ENCODE measurements at regions of chr1 and their contacts with region 1.

Region 1: GRCh38 chr1:15847100-15847892 is at the start of gene SPEN:
- DNase-seq: peak; percentile 97 to 99 (median 99)
- ATAC-seq: peak; percentile 91
- H3K4me3 ChIP-seq: peak within 1 kb of the TSS; percentile 74
- H3K4me3 Mint-ChIP-seq: peak within 1 kb of the TSS; percentile 93 to 99 (median 98)
- H3K27ac ChIP-seq: peak within 1 kb of the TSS; percentile 90
- H3K27ac Mint-ChIP-seq: peak within 1 kb of the TSS; percentile 93 to 98 (median 97)
- H3K4me1 ChIP-seq: peaks cover 20 to 26% of the 10 kb centered on the region in 2 donors
- H3K4me1 Mint-ChIP-seq: peaks cover 21 to 64% (median 44%) of the 10 kb centered on the region in 7 donors
- H3K27me3 ChIP-seq: no peaks in the 10 kb centered on the region
- H3K27me3 Mint-ChIP-seq: no peaks in the 10 kb centered on the region
- total RNA-seq, gene SPEN: 72.1 to 92.1 (median 82.9) TPM

Region 2: GRCh38 chr1:15430787-15431570 is 416.3 kb before region 1 on chr1:
- CTCF ChIA-PET with region 1: no interaction called
- POLR2A ChIA-PET with region 1: no interaction called
- intact Hi-C with region 1: no loop called
- DNase-seq: peak; percentile 48 to 85 (median 68)
- ATAC-seq: peak; percentile 72
- H3K4me3 ChIP-seq: no peak overlapping the region
- H3K4me3 Mint-ChIP-seq: no peak overlapping the region
- H3K27ac ChIP-seq: no peak overlapping the region
- H3K27ac Mint-ChIP-seq: peak overlapping the region in 1 of 9 donors; percentile 77
- H3K4me1 ChIP-seq: no peaks in the 10 kb centered on the region
- H3K4me1 Mint-ChIP-seq: peaks cover 0 to 8% (median 0%) of the 10 kb centered on the region in 7 donors
- H3K27me3 ChIP-seq: no peaks in the 10 kb centered on the region
- H3K27me3 Mint-ChIP-seq: no peaks in the 10 kb centered on the region

Region 3: DNA sequence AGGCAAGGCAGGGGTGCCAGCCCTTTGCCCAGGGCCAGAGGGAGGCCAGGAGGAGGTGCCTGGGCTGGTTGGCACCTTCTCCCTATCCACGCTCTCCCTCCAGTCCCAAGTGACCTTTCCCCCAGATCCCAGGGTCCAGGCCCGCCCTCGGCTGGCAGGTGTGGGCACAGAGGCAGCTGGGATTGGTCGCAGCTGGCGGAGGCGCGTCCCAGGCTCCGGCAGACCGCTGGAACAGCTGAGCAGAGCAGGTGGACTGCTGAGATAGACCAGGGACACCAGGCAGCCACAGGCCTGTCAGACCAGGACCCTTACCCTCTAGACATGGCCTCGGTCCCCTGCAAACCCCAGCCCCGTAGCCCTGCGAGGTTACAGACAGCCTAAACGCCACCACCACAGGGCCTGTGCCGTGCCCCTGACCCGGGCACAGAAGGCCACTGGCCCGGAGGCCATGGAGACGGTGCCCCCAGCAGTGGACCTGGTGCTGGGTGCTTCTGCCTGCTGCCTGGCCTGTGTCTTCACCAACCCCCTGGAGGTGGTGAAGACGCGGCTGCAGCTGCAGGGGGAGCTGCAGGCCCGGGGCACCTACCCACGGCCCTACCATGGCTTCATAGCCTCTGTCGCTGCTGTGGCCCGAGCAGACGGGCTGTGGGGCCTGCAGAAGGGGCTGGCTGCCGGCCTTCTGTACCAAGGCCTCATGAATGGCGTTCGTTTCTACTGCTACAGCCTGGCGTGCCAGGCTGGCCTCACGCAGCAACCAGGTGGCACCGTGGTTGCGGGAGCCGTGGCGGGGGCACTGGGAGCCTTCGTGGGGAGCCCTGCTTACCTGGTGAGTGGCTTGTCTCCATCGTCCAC is 111.0 kb before region 1 on chr1 and contains the start of gene SLC25A34:
- CTCF ChIA-PET with region 1: no interaction called
- POLR2A ChIA-PET with region 1: no interaction called
- intact Hi-C with region 1: no loop called
- DNase-seq: no peak
- ATAC-seq: no peak
- H3K4me3 ChIP-seq: no peak within 1 kb of the TSS
- H3K4me3 Mint-ChIP-seq: no peak within 1 kb of the TSS
- H3K27ac ChIP-seq: no peak within 1 kb of the TSS
- H3K27ac Mint-ChIP-seq: peak within 1 kb of the TSS in 2 of 9 donors; percentile 36 to 47
- H3K4me1 ChIP-seq: no peaks in the 10 kb centered on the region
- H3K4me1 Mint-ChIP-seq: peaks cover under 1 to 3% (median 2%) of the 10 kb centered on the region in 7 donors
- H3K27me3 ChIP-seq: no peaks in the 10 kb centered on the region
- H3K27me3 Mint-ChIP-seq: no peaks in the 10 kb centered on the region
- total RNA-seq, gene SLC25A34: 1.5 to 4.6 (median 2.1) TPM

Region 4: DNA sequence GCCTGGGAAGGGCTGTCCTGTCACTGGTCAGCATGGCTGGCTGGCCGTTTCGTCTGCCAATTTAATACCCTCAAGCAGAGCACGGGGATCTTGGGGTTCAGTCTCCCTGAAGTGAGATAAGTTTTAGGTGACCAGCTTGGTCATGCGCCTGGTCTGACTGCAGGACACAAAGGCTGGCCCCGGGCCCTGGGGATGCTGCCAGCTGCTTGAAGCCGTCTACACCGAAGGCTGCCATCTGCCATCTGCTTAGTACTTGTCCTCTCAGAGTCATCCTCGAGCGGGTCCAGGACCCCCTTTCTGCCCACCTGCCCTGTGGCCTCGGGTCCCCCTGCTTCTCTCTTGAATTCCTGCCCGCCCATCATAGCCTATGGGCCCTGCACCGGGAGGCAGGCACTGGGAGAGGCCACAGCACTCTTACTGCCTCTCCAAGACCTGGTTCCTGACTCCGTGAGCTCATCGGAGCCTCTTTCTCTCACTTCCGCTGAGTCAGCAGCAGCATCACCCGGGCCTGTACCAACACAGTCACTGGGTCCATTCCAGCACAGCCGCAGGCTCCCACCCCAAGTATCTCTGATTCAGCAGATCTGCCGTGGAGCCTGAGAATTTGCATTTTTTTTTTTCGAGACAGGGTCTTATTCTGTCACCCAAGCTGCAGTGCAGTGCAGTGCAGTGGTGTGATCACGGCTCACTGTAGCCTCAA is 81.7 kb before region 1 on chr1:
- CTCF ChIA-PET with region 1: no interaction called
- POLR2A ChIA-PET with region 1: no interaction called
- intact Hi-C with region 1: no loop called
- DNase-seq: no peak
- ATAC-seq: no peak
- H3K4me3 ChIP-seq: no peak overlapping the region
- H3K4me3 Mint-ChIP-seq: no peak overlapping the region
- H3K27ac ChIP-seq: no peak overlapping the region
- H3K27ac Mint-ChIP-seq: no peak overlapping the region
- H3K4me1 ChIP-seq: no peaks in the 10 kb centered on the region
- H3K4me1 Mint-ChIP-seq: peaks cover 0 to 4% (median 0%) of the 10 kb centered on the region in 7 donors
- H3K27me3 ChIP-seq: no peaks in the 10 kb centered on the region
- H3K27me3 Mint-ChIP-seq: peaks cover 12 to 28% (median 17%) of the 10 kb centered on the region in 5 donors

Region 5: GRCh38 chr1:15820478-15820877 is 26.8 kb before region 1 on chr1:
- CTCF ChIA-PET with region 1: interaction called, 5 read pairs
- POLR2A ChIA-PET with region 1: interaction called, 9 read pairs
- intact Hi-C with region 1: loop called (anchors 1 kb)
- DNase-seq: no peak
- ATAC-seq: no peak
- H3K4me3 ChIP-seq: no peak overlapping the region
- H3K4me3 Mint-ChIP-seq: no peak overlapping the region
- H3K27ac ChIP-seq: no peak overlapping the region
- H3K27ac Mint-ChIP-seq: no peak overlapping the region
- H3K4me1 ChIP-seq: no peaks in the 10 kb centered on the region
- H3K4me1 Mint-ChIP-seq: peaks cover 3 to 14% (median 4%) of the 10 kb centered on the region in 7 donors
- H3K27me3 ChIP-seq: no peaks in the 10 kb centered on the region
- H3K27me3 Mint-ChIP-seq: no peaks in the 10 kb centered on the region

Region 6: GRCh38 chr1:15885701-15886610 is 38.7 kb after region 1 on chr1:
- CTCF ChIA-PET with region 1: no interaction called
- POLR2A ChIA-PET with region 1: interaction called, 17 read pairs
- intact Hi-C with region 1: loop called in 1 of 2 experiments (anchors 2 kb)
- DNase-seq: peak; percentile 2 to 40 (median 17)
- ATAC-seq: peak; percentile 89
- H3K4me3 ChIP-seq: no peak overlapping the region
- H3K4me3 Mint-ChIP-seq: peak overlapping the region; percentile 19 to 80 (median 66)
- H3K27ac ChIP-seq: peak overlapping the region; percentile 54
- H3K27ac Mint-ChIP-seq: peak overlapping the region; percentile 20 to 88 (median 74)
- H3K4me1 ChIP-seq: peaks cover 4 to 18% of the 10 kb centered on the region in 2 donors
- H3K4me1 Mint-ChIP-seq: peaks cover 43 to 77% (median 66%) of the 10 kb centered on the region in 7 donors
- H3K27me3 ChIP-seq: no peaks in the 10 kb centered on the region
- H3K27me3 Mint-ChIP-seq: no peaks in the 10 kb centered on the region

Region 7: GRCh38 chr1:15918962-15919715 is 71.8 kb after region 1 on chr1:
- CTCF ChIA-PET with region 1: no interaction called
- POLR2A ChIA-PET with region 1: interaction called, 4 read pairs
- intact Hi-C with region 1: loop called in 1 of 2 experiments (anchors 5 kb)
- DNase-seq: peak in 1 of 9 donors; percentile 74
- ATAC-seq: peak; percentile 68
- H3K4me3 ChIP-seq: no peak overlapping the region
- H3K4me3 Mint-ChIP-seq: peak overlapping the region in 4 of 10 donors; percentile 8 to 76 (median 20)
- H3K27ac ChIP-seq: no peak overlapping the region
- H3K27ac Mint-ChIP-seq: peak overlapping the region in 7 of 9 donors; percentile 16 to 77 (median 33)
- H3K4me1 ChIP-seq: peaks cover 10 to 22% of the 10 kb centered on the region in 2 donors
- H3K4me1 Mint-ChIP-seq: peaks cover 9 to 40% (median 31%) of the 10 kb centered on the region in 7 donors
- H3K27me3 ChIP-seq: no peaks in the 10 kb centered on the region
- H3K27me3 Mint-ChIP-seq: no peaks in the 10 kb centered on the region

Region 8: DNA sequence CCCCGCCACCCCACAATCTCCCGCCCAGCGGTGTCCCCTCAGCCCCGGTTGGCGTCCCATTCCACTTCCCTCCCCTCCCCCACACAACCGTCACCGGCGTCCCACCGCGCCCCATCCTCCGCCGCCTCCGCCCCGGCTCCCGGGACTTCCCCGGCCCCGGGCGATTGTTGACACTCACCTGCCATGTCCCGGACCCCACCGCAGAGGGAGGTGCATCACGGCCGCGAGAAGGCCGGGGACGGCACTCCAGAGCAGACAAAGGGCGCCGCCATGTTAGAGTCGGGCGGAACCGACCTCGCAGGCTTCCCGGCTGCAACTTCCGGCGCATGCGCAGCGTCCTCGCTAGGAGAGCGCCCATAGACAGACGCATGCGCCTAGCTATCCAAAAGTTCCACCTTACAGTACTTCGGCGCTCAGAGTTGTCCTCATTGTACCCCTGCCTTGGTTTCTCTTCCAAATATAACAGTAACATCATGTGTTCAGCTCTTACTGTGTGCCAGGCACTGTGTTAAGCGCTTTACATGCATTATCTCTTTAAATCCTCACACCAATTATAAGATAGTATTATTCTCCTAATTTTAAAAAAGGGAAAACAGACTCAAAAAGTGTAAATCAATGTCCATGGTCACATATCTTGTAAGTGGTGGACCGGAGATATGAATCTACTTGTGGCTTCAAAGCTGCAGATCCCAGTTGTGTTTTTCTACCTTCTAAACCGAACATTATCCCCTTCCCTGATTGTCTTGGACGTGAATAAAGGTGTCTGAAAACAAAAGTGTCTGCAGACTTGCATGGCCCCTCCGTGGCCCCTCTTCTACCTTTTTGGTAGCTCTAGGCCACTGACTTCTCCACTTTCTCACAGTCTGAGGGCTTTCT is 128.7 kb after region 1 on chr1 and contains the start of gene ZBTB17:
- CTCF ChIA-PET with region 1: no interaction called
- POLR2A ChIA-PET with region 1: interaction called, 7 read pairs
- intact Hi-C with region 1: loop called in 1 of 2 experiments (anchors 1 kb)
- DNase-seq: peak; percentile 90 to 95 (median 94)
- ATAC-seq: peak; percentile 96
- H3K4me3 ChIP-seq: peak within 1 kb of the TSS; percentile 76
- H3K4me3 Mint-ChIP-seq: peak within 1 kb of the TSS; percentile 82 to 94 (median 90)
- H3K27ac ChIP-seq: peak within 1 kb of the TSS; percentile 83
- H3K27ac Mint-ChIP-seq: peak within 1 kb of the TSS; percentile 82 to 95 (median 92)
- H3K4me1 ChIP-seq: peaks cover 12 to 17% of the 10 kb centered on the region in 2 donors
- H3K4me1 Mint-ChIP-seq: peaks cover 21 to 46% (median 38%) of the 10 kb centered on the region in 7 donors
- H3K27me3 ChIP-seq: no peaks in the 10 kb centered on the region
- H3K27me3 Mint-ChIP-seq: no peaks in the 10 kb centered on the region
- total RNA-seq, gene ZBTB17: 47.3 to 85.1 (median 65.0) TPM

Region 9: GRCh38 chr1:16217061-16217785 is 369.9 kb after region 1 on chr1:
- CTCF ChIA-PET with region 1: no interaction called
- POLR2A ChIA-PET with region 1: no interaction called
- intact Hi-C with region 1: loop called in 1 of 2 experiments (anchors 5 kb)
- DNase-seq: peak; percentile 80 to 94 (median 89)
- ATAC-seq: peak; percentile 99
- H3K4me3 ChIP-seq: peak overlapping the region; percentile 67
- H3K4me3 Mint-ChIP-seq: peak overlapping the region; percentile 81 to 91 (median 88)
- H3K27ac ChIP-seq: peak overlapping the region; percentile 54
- H3K27ac Mint-ChIP-seq: peak overlapping the region in 8 of 9 donors; percentile 33 to 82 (median 68)
- H3K4me1 ChIP-seq: peaks cover 0 to 6% of the 10 kb centered on the region in 2 donors
- H3K4me1 Mint-ChIP-seq: peaks cover 9 to 30% (median 23%) of the 10 kb centered on the region in 7 donors
- H3K27me3 ChIP-seq: no peaks in the 10 kb centered on the region
- H3K27me3 Mint-ChIP-seq: peaks cover 0 to 11% (median 0%) of the 10 kb centered on the region in 5 donors

Region 10: GRCh38 chr1:16351994-16352841 is 504.9 kb after region 1 on chr1 and contains the start of gene FBXO42:
- CTCF ChIA-PET with region 1: no interaction called
- POLR2A ChIA-PET with region 1: no interaction called
- intact Hi-C with region 1: loop called in 1 of 2 experiments (anchors 5 kb)
- DNase-seq: peak; percentile 88 to 96 (median 94)
- ATAC-seq: peak; percentile 95
- H3K4me3 ChIP-seq: peak within 1 kb of the TSS; percentile 71
- H3K4me3 Mint-ChIP-seq: peak within 1 kb of the TSS; percentile 84 to 98 (median 94)
- H3K27ac ChIP-seq: peak within 1 kb of the TSS; percentile 97
- H3K27ac Mint-ChIP-seq: peak within 1 kb of the TSS; percentile 69 to 98 (median 94)
- H3K4me1 ChIP-seq: peaks cover 10 to 24% of the 10 kb centered on the region in 2 donors
- H3K4me1 Mint-ChIP-seq: peaks cover 17 to 44% (median 34%) of the 10 kb centered on the region in 7 donors
- H3K27me3 ChIP-seq: no peaks in the 10 kb centered on the region
- H3K27me3 Mint-ChIP-seq: no peaks in the 10 kb centered on the region
- total RNA-seq, gene FBXO42: 18.7 to 25.7 (median 24.6) TPM

Measured in naive thymus-derived CD4-positive, alpha-beta T cell (primary cell).